Activated naive CD4-positive, alpha-beta T cell treated with anti-CD3 and anti-CD28 coated beads for 36 hours (primary cell): ENCODE measurements at regions of chr2 and their contacts with region 1.

Region 1: DNA sequence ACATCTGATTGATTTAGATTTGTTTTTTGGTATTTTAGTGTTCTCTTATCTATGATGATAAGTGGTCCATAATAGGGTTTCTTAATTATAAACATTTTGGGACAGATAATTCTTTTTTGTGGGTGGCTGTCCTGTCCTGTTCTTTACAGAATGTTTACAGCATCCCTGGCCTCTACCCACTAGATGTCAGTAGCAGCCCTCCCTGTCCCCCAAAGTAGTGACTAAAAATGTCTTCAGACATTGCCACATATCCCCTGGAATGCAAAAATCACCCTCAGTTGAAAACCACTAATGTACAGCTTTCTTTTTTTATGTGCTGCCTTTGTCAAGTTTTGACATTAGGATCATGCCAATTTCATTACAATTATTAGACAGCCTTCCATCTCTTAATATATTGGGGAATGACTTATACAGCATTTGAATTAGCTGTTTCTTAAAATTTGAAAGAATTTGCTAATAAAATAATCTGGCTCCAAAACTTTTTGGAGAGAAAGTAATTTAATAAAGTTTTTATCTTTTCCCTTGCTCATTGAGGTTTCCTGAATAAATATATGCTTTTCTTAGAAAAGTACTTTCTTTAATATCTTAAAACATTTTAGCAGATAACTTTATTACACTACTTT is 19.5 kb downstream of the WIPF1 start:
- DNase-seq: peak; percentile 77
- H3K4me3 Mint-ChIP-seq: no peak overlapping the region
- H3K27ac Mint-ChIP-seq: peak overlapping the region; percentile 30
- H3K4me1 Mint-ChIP-seq: peaks cover 69% of the 10 kb centered on the region
- H3K27me3 Mint-ChIP-seq: no peaks in the 10 kb centered on the region

Region 2: GRCh38 chr2:173940208-173941020 is 637.7 kb before region 1 on chr2:
- CTCF ChIA-PET with region 1: no interaction called
- intact Hi-C with region 1: no loop called
- DNase-seq: no peak
- H3K4me3 Mint-ChIP-seq: no peak overlapping the region
- H3K27ac Mint-ChIP-seq: peak overlapping the region; percentile 7
- H3K4me1 Mint-ChIP-seq: peaks cover 69% of the 10 kb centered on the region
- H3K27me3 Mint-ChIP-seq: no peaks in the 10 kb centered on the region

Region 3: DNA sequence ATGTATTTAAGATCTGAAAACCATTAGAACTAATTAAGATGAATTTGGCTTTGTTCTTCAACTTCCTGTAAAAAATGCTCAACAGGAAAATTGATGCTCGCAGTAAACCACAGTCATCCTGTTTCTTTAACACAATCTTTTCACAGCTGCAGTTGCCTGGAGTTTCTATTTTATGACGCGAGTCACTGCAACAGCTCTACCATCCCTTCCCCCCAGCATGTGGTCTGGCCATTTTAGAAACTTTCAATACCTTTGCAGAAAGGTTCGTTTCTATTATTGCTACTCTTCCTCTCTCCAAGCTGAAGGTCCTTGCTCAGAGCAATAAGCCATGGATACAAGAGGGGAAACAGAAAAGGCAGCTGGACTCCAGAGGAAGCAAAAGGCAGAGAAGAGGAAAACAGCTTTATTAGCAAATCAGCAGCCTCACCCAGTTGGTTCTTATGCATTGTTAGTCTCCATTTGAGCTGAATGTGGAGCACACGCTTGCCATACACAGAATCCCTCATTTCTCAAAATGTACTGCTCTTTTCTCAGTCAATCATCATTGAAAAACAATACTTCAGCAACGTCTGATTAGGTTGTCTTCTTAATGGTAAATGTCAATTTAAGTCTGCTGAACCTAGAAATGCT is 15.6 kb after region 1 on chr2:
- CTCF ChIA-PET with region 1: interaction called, 224 read pairs
- intact Hi-C with region 1: loop called (anchors 1 kb)
- DNase-seq: peak; percentile 87
- H3K4me3 Mint-ChIP-seq: peak overlapping the region; percentile 77
- H3K27ac Mint-ChIP-seq: peak overlapping the region; percentile 99
- H3K4me1 Mint-ChIP-seq: peaks cover 52% of the 10 kb centered on the region
- H3K27me3 Mint-ChIP-seq: no peaks in the 10 kb centered on the region

Region 4: DNA sequence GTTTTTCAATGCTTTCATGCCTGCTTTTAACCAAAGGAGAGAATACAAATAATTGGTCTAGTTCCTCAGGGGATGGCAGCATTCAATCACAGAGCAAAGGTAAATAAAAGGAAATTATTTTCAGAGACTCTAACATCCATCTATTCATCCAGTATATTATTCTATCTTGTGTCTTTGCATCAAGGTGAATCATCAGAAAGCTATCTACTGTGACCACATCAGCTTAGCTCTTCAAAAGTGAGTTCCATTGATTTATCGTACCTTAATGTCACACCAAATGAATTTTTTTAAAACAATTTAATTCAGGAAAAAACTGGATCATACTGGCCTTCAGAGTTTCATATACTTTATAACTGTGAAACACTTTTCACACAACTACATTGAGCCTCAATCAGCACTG is 361.0 kb after region 1 on chr2:
- CTCF ChIA-PET with region 1: no interaction called
- intact Hi-C with region 1: no loop called
- DNase-seq: no peak
- H3K4me3 Mint-ChIP-seq: no peak overlapping the region
- H3K27ac Mint-ChIP-seq: no peak overlapping the region
- H3K4me1 Mint-ChIP-seq: no peaks in the 10 kb centered on the region
- H3K27me3 Mint-ChIP-seq: no peaks in the 10 kb centered on the region